Activated CD4-positive, alpha-beta T cell treated with anti-CD3 and anti-CD28 coated beads for 36 hours (primary cell): ENCODE measurements at regions of chr19 and their contacts with region 1.

Region 1: DNA sequence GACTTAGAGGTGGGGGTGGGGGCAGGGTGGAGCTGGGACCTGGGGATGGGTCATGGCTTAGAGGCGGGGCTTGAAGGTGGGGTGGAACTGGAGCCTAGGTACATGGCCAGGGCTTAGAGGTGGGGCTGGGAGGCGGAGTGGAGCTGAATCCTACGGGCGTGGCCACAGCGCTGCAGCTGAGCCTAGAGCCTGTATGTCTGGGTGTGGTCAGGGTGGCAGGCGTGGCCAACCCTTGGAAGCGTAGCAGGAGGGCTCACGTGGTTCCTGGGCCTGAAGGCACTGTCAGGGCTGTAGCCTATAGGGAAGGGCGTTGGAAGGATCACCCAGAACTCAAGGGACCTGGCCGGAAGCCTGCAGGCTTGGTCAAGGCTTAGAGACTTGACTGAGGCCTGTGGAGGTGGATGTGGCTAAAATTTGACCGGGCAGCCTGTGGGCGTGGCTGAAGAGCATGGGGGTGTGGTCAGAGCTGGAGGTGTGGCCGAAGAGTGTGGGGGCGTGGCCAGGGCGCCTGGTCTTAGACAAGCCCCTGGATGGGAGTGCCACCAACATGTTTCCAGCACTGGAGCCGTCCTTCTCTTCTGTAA is 24.3 kb downstream of the COLGALT1 start:
- DNase-seq: peak; percentile 52
- ATAC-seq: peak; percentile 56
- H3K4me3 Mint-ChIP-seq: no peak overlapping the region
- H3K27ac Mint-ChIP-seq: no peak overlapping the region
- H3K4me1 Mint-ChIP-seq: no peaks in the 10 kb centered on the region
- H3K27me3 Mint-ChIP-seq: no peaks in the 10 kb centered on the region

Region 2: DNA sequence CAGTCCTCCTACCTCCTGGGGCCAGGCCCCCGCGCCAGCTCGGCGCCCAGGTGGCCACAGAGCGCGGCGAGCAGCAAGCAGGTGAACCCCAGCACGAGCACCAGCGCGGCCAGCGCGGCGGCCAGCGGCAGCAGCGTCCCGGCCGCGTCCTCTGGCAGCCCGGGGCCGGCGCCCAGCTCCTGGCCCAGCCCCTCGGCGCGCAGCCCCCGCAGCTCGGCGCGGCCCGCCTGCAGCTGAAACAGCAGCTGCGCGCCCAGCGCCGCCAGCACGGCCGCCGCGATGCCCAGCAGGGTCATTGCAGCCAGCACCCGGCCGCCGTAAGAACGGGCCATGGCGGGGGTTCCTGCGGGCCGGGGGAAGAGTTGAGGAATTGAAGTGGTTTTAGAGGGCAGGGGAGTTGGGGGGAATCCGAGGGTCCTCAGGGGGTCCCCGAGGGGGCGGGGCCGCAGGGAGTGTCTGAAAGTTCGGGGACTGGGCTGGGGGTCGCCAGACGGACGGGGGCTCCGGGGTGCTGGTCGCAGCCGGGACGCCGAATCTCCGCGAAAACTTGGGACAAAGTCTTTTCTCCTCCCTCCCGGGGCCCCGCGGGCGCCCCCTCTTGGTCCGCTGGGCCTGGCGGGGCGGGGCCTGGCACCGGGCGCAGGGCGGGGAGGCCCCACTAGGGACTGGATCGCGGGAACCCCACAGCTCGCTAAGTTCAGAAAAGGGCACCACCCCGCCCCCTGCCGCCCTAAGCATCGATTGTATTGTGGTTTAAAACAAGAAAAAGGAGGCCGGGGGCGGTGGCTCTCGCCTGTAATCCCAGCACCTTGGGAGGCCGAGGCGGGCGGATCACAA is 131.4 kb before region 1 on chr19 and contains the start of gene TMEM221:
- CTCF ChIA-PET with region 1: no interaction called
- POLR2A ChIA-PET with region 1: no interaction called
- intact Hi-C with region 1: loop called (anchors 1 to 5 kb)
- DNase-seq: peak; percentile 77
- ATAC-seq: peak; percentile 57
- H3K4me3 Mint-ChIP-seq: no peak within 1 kb of the TSS
- H3K27ac Mint-ChIP-seq: no peak within 1 kb of the TSS
- H3K4me1 Mint-ChIP-seq: peaks cover 16% of the 10 kb centered on the region
- H3K27me3 Mint-ChIP-seq: peaks cover 14% of the 10 kb centered on the region
- total RNA-seq, gene TMEM221: not detected

Region 3: GRCh38 chr19:17496337-17496997 is 83.3 kb before region 1 on chr19:
- CTCF ChIA-PET with region 1: interaction called, 3 read pairs
- POLR2A ChIA-PET with region 1: no interaction called
- intact Hi-C with region 1: loop called in 1 of 2 experiments (anchors 1 kb)
- DNase-seq: peak; percentile 93
- ATAC-seq: peak; percentile 99
- H3K4me3 Mint-ChIP-seq: no peak overlapping the region
- H3K27ac Mint-ChIP-seq: no peak overlapping the region
- H3K4me1 Mint-ChIP-seq: peaks cover 14% of the 10 kb centered on the region
- H3K27me3 Mint-ChIP-seq: no peaks in the 10 kb centered on the region